Activated naive CD4-positive, alpha-beta T cell treated with anti-CD3 and anti-CD28 coated beads for 36 hours (primary cell): ENCODE measurements at regions of chr5 and their contacts with region 1.

Region 1: GRCh38 chr5:124649491-124650146 is 96.8 kb downstream of the ZNF608 start:
- DNase-seq: peak; percentile 74
- H3K4me3 Mint-ChIP-seq: no peak overlapping the region
- H3K27ac Mint-ChIP-seq: no peak overlapping the region
- H3K4me1 Mint-ChIP-seq: peaks cover 29% of the 10 kb centered on the region
- H3K27me3 Mint-ChIP-seq: peaks cover 36% of the 10 kb centered on the region

Region 2: GRCh38 chr5:124583469-124584350 is 65.9 kb before region 1 on chr5:
- CTCF ChIA-PET with region 1: no interaction called
- intact Hi-C with region 1: loop called (anchors 1 kb)
- DNase-seq: peak; percentile 26
- H3K4me3 Mint-ChIP-seq: no peak overlapping the region
- H3K27ac Mint-ChIP-seq: no peak overlapping the region
- H3K4me1 Mint-ChIP-seq: peaks cover 17% of the 10 kb centered on the region
- H3K27me3 Mint-ChIP-seq: no peaks in the 10 kb centered on the region

Region 3: GRCh38 chr5:124669956-124670721 is 20.5 kb after region 1 on chr5:
- CTCF ChIA-PET with region 1: no interaction called
- intact Hi-C with region 1: no loop called
- DNase-seq: no peak
- H3K4me3 Mint-ChIP-seq: no peak overlapping the region
- H3K27ac Mint-ChIP-seq: no peak overlapping the region
- H3K4me1 Mint-ChIP-seq: no peaks in the 10 kb centered on the region
- H3K27me3 Mint-ChIP-seq: no peaks in the 10 kb centered on the region

Region 4: GRCh38 chr5:124706729-124707361 is 57.2 kb after region 1 on chr5:
- CTCF ChIA-PET with region 1: no interaction called
- intact Hi-C with region 1: no loop called
- DNase-seq: no peak
- H3K4me3 Mint-ChIP-seq: no peak overlapping the region
- H3K27ac Mint-ChIP-seq: no peak overlapping the region
- H3K4me1 Mint-ChIP-seq: no peaks in the 10 kb centered on the region
- H3K27me3 Mint-ChIP-seq: peaks cover 2% of the 10 kb centered on the region

Region 5: GRCh38 chr5:124748687-124749594 is 99.3 kb after region 1 on chr5:
- CTCF ChIA-PET with region 1: no interaction called
- intact Hi-C with region 1: loop called (anchors 5 kb)
- DNase-seq: peak; percentile 12
- H3K4me3 Mint-ChIP-seq: peak overlapping the region; percentile 56
- H3K27ac Mint-ChIP-seq: no peak overlapping the region
- H3K4me1 Mint-ChIP-seq: peaks cover 25% of the 10 kb centered on the region
- H3K27me3 Mint-ChIP-seq: peaks cover 49% of the 10 kb centered on the region

Region 6: GRCh38 chr5:124806373-124807077 is 156.9 kb after region 1 on chr5:
- CTCF ChIA-PET with region 1: no interaction called
- intact Hi-C with region 1: no loop called
- DNase-seq: no peak
- H3K4me3 Mint-ChIP-seq: no peak overlapping the region
- H3K27ac Mint-ChIP-seq: no peak overlapping the region
- H3K4me1 Mint-ChIP-seq: no peaks in the 10 kb centered on the region
- H3K27me3 Mint-ChIP-seq: peaks cover 5% of the 10 kb centered on the region

Region 7: DNA sequence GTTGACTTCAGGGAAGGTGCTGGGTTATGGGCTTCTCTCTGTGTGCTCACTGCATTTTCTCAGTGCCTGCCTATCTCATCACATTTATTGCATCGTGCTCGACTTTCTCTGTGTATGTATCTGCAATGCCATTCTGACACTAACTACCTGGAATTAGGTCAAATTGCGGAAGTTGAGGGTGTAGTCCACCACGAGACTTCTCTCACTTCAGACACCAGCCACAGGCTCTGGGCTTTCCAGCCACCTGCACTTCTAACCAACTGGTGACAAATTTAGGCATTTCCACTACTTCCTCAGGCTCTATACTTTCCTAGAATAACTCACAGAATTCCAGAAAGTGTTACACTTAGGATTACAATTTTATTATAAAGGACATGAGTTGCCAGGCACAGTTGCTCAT is 285.4 kb after region 1 on chr5:
- CTCF ChIA-PET with region 1: no interaction called
- intact Hi-C with region 1: loop called (anchors 5 kb)
- DNase-seq: no peak
- H3K4me3 Mint-ChIP-seq: no peak overlapping the region
- H3K27ac Mint-ChIP-seq: no peak overlapping the region
- H3K4me1 Mint-ChIP-seq: peaks cover 3% of the 10 kb centered on the region
- H3K27me3 Mint-ChIP-seq: no peaks in the 10 kb centered on the region